ENCODE measurements at regions of chr2 and their contacts with region 1.

Region 1: GRCh38 chr2:209565896-209566582 is 142.2 kb downstream of the MAP2 start:
- DNase-seq: no peak
- ATAC-seq: no peak
- H3K4me3 ChIP-seq: no peak overlapping the region
- H3K27ac ChIP-seq: no peak overlapping the region
- H3K4me1 ChIP-seq: no peaks in the 10 kb centered on the region
- H3K27me3 ChIP-seq: no peaks in the 10 kb centered on the region
- CTCF ChIP-seq: no peak
- EP300 ChIP-seq: no peak
- POLR2A ChIP-seq: no peak
- RAD21 ChIP-seq: no peak

Region 2: DNA sequence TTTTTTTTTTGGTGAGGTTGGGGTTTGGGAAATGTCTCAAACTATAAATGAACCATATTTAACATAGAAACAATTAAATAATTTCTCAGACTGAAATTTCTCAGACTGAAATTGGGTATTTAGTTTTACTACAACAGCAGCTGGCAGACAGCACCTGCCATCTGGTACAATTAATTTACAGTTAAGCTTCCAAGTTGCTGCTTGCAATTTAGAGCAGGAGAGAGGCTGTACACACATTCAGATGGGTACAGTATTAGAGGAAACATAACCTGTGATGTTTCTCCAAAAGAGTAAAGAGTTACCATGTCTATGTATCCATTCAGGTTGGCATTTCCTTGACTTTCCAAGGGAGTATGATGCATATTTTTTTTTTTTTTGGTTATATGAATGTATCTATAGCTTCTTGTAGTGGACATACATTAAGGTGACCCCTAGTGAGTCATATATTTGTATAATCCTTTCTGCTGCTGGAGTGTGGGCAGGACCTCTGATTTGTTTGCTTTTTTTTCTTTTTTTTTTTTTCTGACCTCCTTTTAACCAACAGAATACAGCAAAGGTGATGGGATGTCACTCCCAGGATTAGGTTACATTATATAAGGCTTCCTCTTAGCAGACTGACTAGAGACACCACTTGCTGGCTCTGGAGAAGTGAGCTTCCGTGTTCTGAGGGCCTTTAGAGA is 957.8 kb before region 1 on chr2:
- CTCF ChIA-PET with region 1: no interaction called
- POLR2A ChIA-PET with region 1: interaction called, 10 read pairs
- RAD21 ChIA-PET with region 1: no interaction called
- SMC1A ChIA-PET with region 1: no interaction called
- in situ Hi-C with region 1: no loop called
- intact Hi-C with region 1: no loop called
- DNase-seq: no peak
- ATAC-seq: no peak
- H3K4me3 ChIP-seq: no peak overlapping the region
- H3K27ac ChIP-seq: no peak overlapping the region
- H3K4me1 ChIP-seq: no peaks in the 10 kb centered on the region
- H3K27me3 ChIP-seq: no peaks in the 10 kb centered on the region
- CTCF ChIP-seq: no peak
- EP300 ChIP-seq: no peak
- POLR2A ChIP-seq: no peak
- RAD21 ChIP-seq: no peak

Region 3: GRCh38 chr2:208916881-208917280 is 649.2 kb before region 1 on chr2:
- CTCF ChIA-PET with region 1: no interaction called
- POLR2A ChIA-PET with region 1: no interaction called
- RAD21 ChIA-PET with region 1: no interaction called
- SMC1A ChIA-PET with region 1: no interaction called
- in situ Hi-C with region 1: no loop called
- intact Hi-C with region 1: no loop called
- DNase-seq: no peak
- ATAC-seq: no peak
- H3K4me3 ChIP-seq: no peak overlapping the region
- H3K27ac ChIP-seq: no peak overlapping the region
- H3K4me1 ChIP-seq: no peaks in the 10 kb centered on the region
- H3K27me3 ChIP-seq: no peaks in the 10 kb centered on the region
- CTCF ChIP-seq: no peak
- EP300 ChIP-seq: no peak
- POLR2A ChIP-seq: no peak
- RAD21 ChIP-seq: no peak

Region 4: GRCh38 chr2:209348433-209348832 is 217.6 kb before region 1 on chr2:
- CTCF ChIA-PET with region 1: no interaction called
- POLR2A ChIA-PET with region 1: no interaction called
- RAD21 ChIA-PET with region 1: no interaction called
- SMC1A ChIA-PET with region 1: no interaction called
- in situ Hi-C with region 1: loop called (anchors 10 kb)
- intact Hi-C with region 1: no loop called
- DNase-seq: no peak
- ATAC-seq: no peak
- H3K4me3 ChIP-seq: no peak overlapping the region
- H3K27ac ChIP-seq: no peak overlapping the region
- H3K4me1 ChIP-seq: no peaks in the 10 kb centered on the region
- H3K27me3 ChIP-seq: no peaks in the 10 kb centered on the region
- CTCF ChIP-seq: no peak
- EP300 ChIP-seq: no peak
- POLR2A ChIP-seq: no peak
- RAD21 ChIP-seq: no peak

Region 5: DNA sequence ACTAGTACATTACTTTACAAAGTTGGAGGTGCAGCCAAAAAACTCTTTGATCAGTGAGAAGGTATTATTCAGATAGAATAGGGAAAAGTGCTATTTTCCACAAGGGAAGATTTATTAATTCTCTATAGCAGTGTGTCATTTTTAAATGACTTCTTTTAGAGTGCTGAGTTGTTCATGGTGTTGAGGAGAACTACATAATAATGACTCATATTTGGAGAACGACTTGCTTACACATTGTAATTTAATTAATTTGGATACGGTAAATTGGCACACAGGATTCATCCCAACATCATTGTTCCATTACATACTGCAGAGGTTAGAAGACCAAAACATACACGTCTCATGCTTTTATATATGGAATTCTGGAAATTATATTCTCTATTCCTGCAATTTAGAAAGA is 164.3 kb before region 1 on chr2:
- CTCF ChIA-PET with region 1: no interaction called
- POLR2A ChIA-PET with region 1: no interaction called
- RAD21 ChIA-PET with region 1: no interaction called
- SMC1A ChIA-PET with region 1: no interaction called
- in situ Hi-C with region 1: no loop called
- intact Hi-C with region 1: no loop called
- DNase-seq: no peak
- ATAC-seq: no peak
- H3K4me3 ChIP-seq: no peak overlapping the region
- H3K27ac ChIP-seq: no peak overlapping the region
- H3K4me1 ChIP-seq: no peaks in the 10 kb centered on the region
- H3K27me3 ChIP-seq: no peaks in the 10 kb centered on the region; a peak in 1 of 4 replicates
- CTCF ChIP-seq: no peak
- EP300 ChIP-seq: no peak
- POLR2A ChIP-seq: no peak
- RAD21 ChIP-seq: no peak

Region 6: DNA sequence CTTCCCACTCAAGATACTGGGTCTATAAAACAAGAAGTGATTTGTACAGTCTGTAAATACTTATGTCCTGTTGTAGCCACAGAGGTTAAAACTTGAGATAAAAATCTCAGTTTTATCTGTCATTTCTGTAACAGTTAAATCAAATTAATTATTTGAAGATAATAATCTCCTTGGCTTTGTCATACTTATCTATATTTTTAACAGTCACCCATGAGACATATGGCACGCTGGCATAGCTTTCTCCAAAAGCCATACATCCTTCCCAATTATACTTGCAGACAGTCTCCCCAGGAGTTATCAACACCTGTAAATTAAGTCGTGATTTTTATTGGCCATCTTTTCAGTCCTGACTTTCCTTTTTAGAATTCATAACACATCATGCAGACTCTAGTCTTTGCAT is 136.7 kb after region 1 on chr2:
- CTCF ChIA-PET with region 1: no interaction called
- POLR2A ChIA-PET with region 1: no interaction called
- RAD21 ChIA-PET with region 1: no interaction called
- SMC1A ChIA-PET with region 1: no interaction called
- in situ Hi-C with region 1: no loop called
- intact Hi-C with region 1: no loop called
- DNase-seq: no peak
- ATAC-seq: no peak
- H3K4me3 ChIP-seq: no peak overlapping the region
- H3K27ac ChIP-seq: no peak overlapping the region
- H3K4me1 ChIP-seq: no peaks in the 10 kb centered on the region; the same call in 1 of the 2 replicates
- H3K27me3 ChIP-seq: no peaks in the 10 kb centered on the region
- CTCF ChIP-seq: no peak
- EP300 ChIP-seq: no peak
- POLR2A ChIP-seq: no peak
- RAD21 ChIP-seq: no peak